ENCODE measurements at regions of chr1 and their contacts with region 1.

Region 1: GRCh38 chr1:39189592-39190041 is 14.9 kb upstream of the MACF1 start:
- DNase-seq: no peak
- H3K4me3 Mint-ChIP-seq: peak overlapping the region; percentile 25
- H3K27ac Mint-ChIP-seq: peak overlapping the region; percentile 87
- H3K4me1 Mint-ChIP-seq: peaks cover 73% of the 10 kb centered on the region
- H3K27me3 Mint-ChIP-seq: no peaks in the 10 kb centered on the region

Region 2: GRCh38 chr1:38783640-38784229 is 405.9 kb before region 1 on chr1:
- intact Hi-C with region 1: no loop called
- DNase-seq: no peak
- H3K4me3 Mint-ChIP-seq: no peak overlapping the region
- H3K27ac Mint-ChIP-seq: no peak overlapping the region
- H3K4me1 Mint-ChIP-seq: no peaks in the 10 kb centered on the region
- H3K27me3 Mint-ChIP-seq: peaks cover 41% of the 10 kb centered on the region

Region 3: DNA sequence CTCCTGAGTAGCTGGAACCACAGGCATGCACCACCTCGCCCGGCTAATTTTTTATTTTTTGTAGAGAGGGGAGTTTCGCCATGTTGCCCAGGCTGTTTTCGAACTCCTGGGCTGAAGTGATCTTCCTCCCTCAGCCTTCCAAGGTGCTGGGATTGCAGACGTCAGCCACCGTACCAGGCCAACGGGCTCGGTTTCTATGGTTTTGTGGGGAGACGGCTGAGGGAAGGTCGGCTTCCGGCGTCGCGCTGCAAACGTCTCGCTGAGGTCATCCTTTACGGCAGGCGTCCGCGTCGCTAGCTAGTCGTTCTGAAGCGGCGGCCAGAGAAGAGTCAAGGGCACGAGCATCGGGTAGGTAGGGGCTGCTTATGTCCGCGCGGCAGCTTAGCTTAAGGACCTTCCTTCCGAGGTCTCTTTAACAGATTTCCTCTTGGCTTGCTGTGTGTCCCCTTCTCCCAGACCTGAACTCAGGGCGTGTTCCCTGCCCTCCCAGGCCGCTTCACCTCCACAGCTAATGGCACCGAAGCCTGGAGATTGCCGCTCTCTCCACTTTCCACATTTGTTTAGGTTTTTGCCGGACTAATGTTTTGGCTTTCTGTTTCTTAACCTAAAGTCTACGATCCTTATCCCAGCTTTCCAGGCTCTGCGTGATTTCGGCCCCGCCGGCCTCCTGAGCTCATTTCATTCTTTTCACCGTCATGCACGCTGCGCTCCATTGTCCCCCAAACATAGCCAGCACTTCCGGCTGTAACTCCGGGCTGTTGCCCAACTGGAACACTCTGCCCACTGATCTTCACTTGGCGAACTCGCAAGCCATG is 163.4 kb before region 1 on chr1 and contains the start of gene NDUFS5:
- intact Hi-C with region 1: loop called (anchors 5 kb)
- DNase-seq: peak; percentile 95
- H3K4me3 Mint-ChIP-seq: peak within 1 kb of the TSS; percentile 91
- H3K27ac Mint-ChIP-seq: peak within 1 kb of the TSS; percentile 97
- H3K4me1 Mint-ChIP-seq: peaks cover 23% of the 10 kb centered on the region
- H3K27me3 Mint-ChIP-seq: peaks cover 2% of the 10 kb centered on the region
- total RNA-seq, gene NDUFS5: 162 and 164 TPM in 2 replicates

Region 4: GRCh38 chr1:39230261-39231190 is 40.9 kb after region 1 on chr1:
- intact Hi-C with region 1: no loop called
- DNase-seq: peak; percentile 70
- H3K4me3 Mint-ChIP-seq: peak overlapping the region; percentile 39
- H3K27ac Mint-ChIP-seq: peak overlapping the region; percentile 42
- H3K4me1 Mint-ChIP-seq: peaks cover 40% of the 10 kb centered on the region
- H3K27me3 Mint-ChIP-seq: no peaks in the 10 kb centered on the region